ENCODE measurements at regions of chr3 and their contacts with region 1.

Region 1: GRCh38 chr3:98022978-98023820 is 11.9 kb downstream of the GABRR3 start:
- DNase-seq: peak; percentile 42
- H3K4me3 ChIP-seq: peak overlapping the region in 1 of 2 experiments; percentile 40; a peak in 1 of 4 replicates
- H3K27ac ChIP-seq: no peak overlapping the region
- H3K4me1 ChIP-seq: no peaks in the 10 kb centered on the region
- H3K27me3 ChIP-seq: peaks cover 9% of the 10 kb centered on the region; the same call in 1 of the 2 replicates
- CTCF ChIP-seq: peak; percentile 98
- EP300 ChIP-seq: no peak
- RAD21 ChIP-seq: peak; percentile 98

Region 2: GRCh38 chr3:97687734-97688133 is 335.5 kb before region 1 on chr3:
- CTCF ChIA-PET with region 1: no interaction called
- POLR2A ChIA-PET with region 1: no interaction called
- DNase-seq: no peak
- H3K4me3 ChIP-seq: no peak overlapping the region
- H3K27ac ChIP-seq: no peak overlapping the region
- H3K4me1 ChIP-seq: peaks cover 0 to under 1% of the 10 kb centered on the region in 2 experiments; a peak in 1 of 4 replicates
- H3K27me3 ChIP-seq: no peaks in the 10 kb centered on the region
- CTCF ChIP-seq: no peak
- EP300 ChIP-seq: no peak
- RAD21 ChIP-seq: no peak

Region 3: DNA sequence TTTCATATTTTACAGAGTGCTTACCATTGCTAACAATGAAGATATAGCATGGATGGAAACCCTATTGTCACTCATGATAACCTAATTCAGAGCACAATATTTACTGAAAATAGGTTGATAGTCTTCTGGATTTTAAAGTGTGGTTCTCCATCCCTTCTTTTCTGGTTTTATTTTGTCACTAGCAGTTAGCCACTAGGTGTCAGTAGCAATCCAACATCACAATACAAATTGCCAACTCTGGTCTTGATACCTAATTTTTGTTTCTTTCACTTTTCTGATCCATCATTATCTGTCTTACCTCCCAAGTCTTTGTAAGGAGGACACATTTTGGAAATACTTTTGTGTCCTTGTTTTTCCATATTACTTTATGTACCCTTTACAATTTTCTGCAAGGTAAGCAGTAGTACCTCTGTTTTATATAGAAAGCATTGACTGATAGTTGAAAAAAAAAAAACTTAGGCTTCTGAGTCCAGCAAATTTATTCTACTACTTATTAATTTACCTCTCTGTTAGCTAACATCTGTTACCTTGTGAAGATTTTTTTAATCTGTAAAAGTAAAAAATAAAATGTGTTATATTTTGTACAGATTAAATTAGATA is 229.7 kb before region 1 on chr3:
- CTCF ChIA-PET with region 1: interaction called, 128 read pairs
- POLR2A ChIA-PET with region 1: no interaction called
- DNase-seq: peak; percentile 30
- H3K4me3 ChIP-seq: no peak overlapping the region; a peak in 1 of 4 replicates
- H3K27ac ChIP-seq: no peak overlapping the region
- H3K4me1 ChIP-seq: no peaks in the 10 kb centered on the region
- H3K27me3 ChIP-seq: no peaks in the 10 kb centered on the region
- CTCF ChIP-seq: peak; percentile 86
- EP300 ChIP-seq: no peak
- RAD21 ChIP-seq: peak; percentile 91

Region 4: GRCh38 chr3:97821810-97822775 is 201.1 kb before region 1 on chr3 and contains the start of gene CRYBG3:
- CTCF ChIA-PET with region 1: interaction called, 34 read pairs
- POLR2A ChIA-PET with region 1: no interaction called
- DNase-seq: peak; percentile 92
- H3K4me3 ChIP-seq: peak within 1 kb of the TSS; percentile 91 to 93
- H3K27ac ChIP-seq: peak within 1 kb of the TSS; percentile 68 to 69; a peak in 3 of 4 replicates
- H3K4me1 ChIP-seq: peaks cover 5 to 8% of the 10 kb centered on the region in 2 experiments; a peak in 3 of 4 replicates
- H3K27me3 ChIP-seq: peaks cover 5% of the 10 kb centered on the region; the same call in 1 of the 2 replicates
- CTCF ChIP-seq: peak; percentile 58
- EP300 ChIP-seq: no peak
- RAD21 ChIP-seq: no peak
- polyA plus RNA-seq, gene CRYBG3: 2.4 and 2.8 TPM in 2 replicates

Region 5: GRCh38 chr3:98039322-98040024 is 16.3 kb after region 1 on chr3:
- CTCF ChIA-PET with region 1: interaction called, 26 read pairs
- POLR2A ChIA-PET with region 1: no interaction called
- DNase-seq: peak; percentile 42
- H3K4me3 ChIP-seq: peak overlapping the region; percentile 48 to 64
- H3K27ac ChIP-seq: no peak overlapping the region
- H3K4me1 ChIP-seq: no peaks in the 10 kb centered on the region; a peak in 1 of 4 replicates
- H3K27me3 ChIP-seq: no peaks in the 10 kb centered on the region
- CTCF ChIP-seq: peak; percentile 96
- EP300 ChIP-seq: no peak
- RAD21 ChIP-seq: peak; percentile 81

Region 6: DNA sequence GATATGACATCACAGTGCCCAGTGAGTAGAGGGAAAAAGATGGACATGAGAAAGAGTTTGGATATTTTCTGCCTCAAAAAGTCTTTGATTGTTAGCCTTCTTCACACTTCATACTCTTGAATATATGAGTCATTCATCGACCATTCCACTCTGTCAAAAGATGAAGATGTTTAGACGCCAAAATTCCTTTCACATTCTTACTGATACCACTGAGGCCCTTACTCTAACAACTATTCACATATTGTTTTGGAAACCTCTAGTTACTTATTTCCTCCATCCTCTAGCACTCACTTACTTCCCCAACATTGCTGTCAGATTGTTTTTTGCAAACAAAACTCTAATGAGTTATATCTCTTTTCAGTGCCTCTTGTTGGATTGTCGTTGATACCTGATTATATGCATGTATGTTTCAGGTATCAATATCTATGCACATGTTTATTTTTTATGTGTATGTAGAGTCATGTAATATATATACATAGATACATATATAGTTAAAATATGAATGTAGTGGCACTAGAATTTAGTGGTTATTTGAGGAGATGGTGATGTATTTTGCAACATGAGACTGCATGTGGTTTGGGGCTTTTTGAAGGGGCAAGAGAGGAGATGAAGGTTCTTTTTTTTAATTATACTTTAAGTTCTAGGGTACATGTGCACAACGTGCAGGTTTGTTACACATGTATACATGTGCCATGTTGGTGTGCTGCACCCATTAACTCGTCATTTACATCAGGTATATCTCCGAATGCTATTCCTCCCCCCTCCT is 200.9 kb after region 1 on chr3:
- CTCF ChIA-PET with region 1: no interaction called
- POLR2A ChIA-PET with region 1: no interaction called
- DNase-seq: no peak
- H3K4me3 ChIP-seq: no peak overlapping the region
- H3K27ac ChIP-seq: no peak overlapping the region
- H3K4me1 ChIP-seq: no peaks in the 10 kb centered on the region
- H3K27me3 ChIP-seq: no peaks in the 10 kb centered on the region
- CTCF ChIP-seq: no peak
- EP300 ChIP-seq: no peak
- RAD21 ChIP-seq: no peak

Measured in SK-N-SH (cell line).